Caco-2 (cell line): ENCODE measurements at regions of chr6 and their contacts with region 1.

Region 1: GRCh38 chr6:50602292-50602691 is 111.0 kb upstream of the TFAP2D start:
- DNase-seq: peak in 1 of 2 experiments; percentile 57
- H3K4me3 ChIP-seq: no peak overlapping the region
- H3K4me3 Mint-ChIP-seq: no peak overlapping the region
- H3K27ac Mint-ChIP-seq: no peak overlapping the region
- H3K4me1 ChIP-seq: no peaks in the 10 kb centered on the region
- H3K4me1 Mint-ChIP-seq: no peaks in the 10 kb centered on the region
- H3K27me3 ChIP-seq: no peaks in the 10 kb centered on the region
- H3K27me3 Mint-ChIP-seq: no peaks in the 10 kb centered on the region
- CTCF ChIP-seq: peak; percentile 63 to 66

Region 2: DNA sequence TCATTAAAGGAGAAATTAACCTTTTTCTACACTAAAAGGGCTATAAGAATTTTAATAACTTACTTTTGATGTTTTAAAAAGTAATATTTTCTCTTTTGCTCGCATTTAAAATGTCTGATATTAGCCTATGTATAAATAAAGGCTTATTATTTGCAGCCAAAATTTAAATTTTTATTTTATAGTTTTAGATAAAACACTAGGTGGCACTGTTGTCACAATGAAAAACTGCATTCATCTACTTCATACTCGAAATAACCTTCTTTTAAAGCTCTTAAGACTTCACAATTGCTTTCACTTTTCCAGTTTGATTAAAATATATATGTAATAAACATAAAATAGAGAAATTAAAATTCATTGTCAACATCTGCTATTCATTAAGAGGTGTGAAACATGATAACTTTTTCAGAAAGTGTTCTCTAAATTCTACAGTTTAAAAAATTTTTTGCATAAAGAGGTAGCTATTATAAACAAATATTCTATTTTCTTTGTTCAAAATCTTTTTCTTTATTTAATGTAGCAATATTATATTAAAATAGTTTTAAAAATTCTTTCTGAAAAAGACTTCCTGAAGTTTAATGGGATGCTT is 473.8 kb before region 1 on chr6:
- CTCF ChIA-PET with region 1: interaction called, 3 read pairs
- POLR2A ChIA-PET with region 1: no interaction called
- intact Hi-C with region 1: loop called (anchors 1 kb)
- DNase-seq: no peak
- H3K4me3 ChIP-seq: no peak overlapping the region
- H3K4me3 Mint-ChIP-seq: no peak overlapping the region
- H3K27ac Mint-ChIP-seq: no peak overlapping the region
- H3K4me1 ChIP-seq: no peaks in the 10 kb centered on the region
- H3K4me1 Mint-ChIP-seq: peaks cover 6% of the 10 kb centered on the region
- H3K27me3 ChIP-seq: no peaks in the 10 kb centered on the region
- H3K27me3 Mint-ChIP-seq: no peaks in the 10 kb centered on the region
- CTCF ChIP-seq: peak; percentile 16 to 41

Region 3: DNA sequence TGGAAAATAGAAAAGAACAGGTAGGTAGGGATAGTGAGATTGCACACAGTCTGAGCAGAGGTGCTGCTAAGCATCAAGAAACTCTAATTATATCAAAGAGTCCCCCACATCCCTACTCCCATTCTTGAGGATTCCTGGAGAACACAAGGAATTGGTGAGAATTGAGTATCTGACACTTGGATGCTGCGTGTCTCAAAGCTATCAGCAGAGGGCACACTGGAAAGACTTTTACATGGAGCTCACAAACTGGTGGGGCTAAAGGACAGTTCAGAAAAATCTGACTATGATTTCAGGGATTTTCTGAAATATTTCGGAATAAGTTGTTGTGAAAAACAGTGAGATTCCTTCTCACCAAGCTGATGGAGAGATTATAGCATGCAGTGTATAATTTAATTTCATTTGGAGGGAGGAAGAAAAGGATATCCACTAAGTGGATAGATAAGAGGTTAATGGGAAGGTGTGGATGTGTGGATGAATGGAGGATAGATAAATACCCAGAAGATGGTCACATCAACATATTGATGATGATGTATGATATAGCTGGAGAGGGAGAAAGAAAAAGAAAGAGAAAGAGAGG is 337.2 kb before region 1 on chr6:
- CTCF ChIA-PET with region 1: interaction called, 3 read pairs
- POLR2A ChIA-PET with region 1: no interaction called
- intact Hi-C with region 1: loop called (anchors 1 kb)
- DNase-seq: peak in 1 of 2 experiments; percentile 13
- H3K4me3 ChIP-seq: no peak overlapping the region
- H3K4me3 Mint-ChIP-seq: no peak overlapping the region
- H3K27ac Mint-ChIP-seq: no peak overlapping the region
- H3K4me1 ChIP-seq: no peaks in the 10 kb centered on the region
- H3K4me1 Mint-ChIP-seq: no peaks in the 10 kb centered on the region
- H3K27me3 ChIP-seq: no peaks in the 10 kb centered on the region
- H3K27me3 Mint-ChIP-seq: peaks cover 7% of the 10 kb centered on the region
- CTCF ChIP-seq: peak; percentile 50 to 54

Region 4: DNA sequence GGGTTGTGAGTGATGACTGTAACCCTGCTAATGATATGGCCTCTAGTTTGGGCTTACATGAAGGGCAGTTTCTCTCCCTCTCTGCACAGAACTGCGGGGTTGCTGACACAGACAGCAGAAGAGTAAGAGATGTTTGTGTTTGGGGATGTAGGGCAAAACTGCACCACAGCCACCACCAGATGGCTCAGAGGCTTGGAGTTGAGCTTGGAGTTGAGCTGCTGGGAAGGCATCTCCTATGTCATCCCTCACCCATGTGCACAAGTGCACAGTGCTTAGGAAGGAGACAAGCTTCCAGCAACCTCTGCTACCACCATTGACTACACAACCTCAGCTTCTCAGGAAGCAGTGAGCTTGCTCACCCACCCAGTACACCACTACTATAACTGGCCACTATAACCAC is 248.7 kb before region 1 on chr6:
- CTCF ChIA-PET with region 1: no interaction called
- POLR2A ChIA-PET with region 1: no interaction called
- intact Hi-C with region 1: loop called (anchors 1 kb)
- DNase-seq: peak in 1 of 2 experiments; percentile 10
- H3K4me3 ChIP-seq: no peak overlapping the region
- H3K4me3 Mint-ChIP-seq: no peak overlapping the region
- H3K27ac Mint-ChIP-seq: no peak overlapping the region
- H3K4me1 ChIP-seq: no peaks in the 10 kb centered on the region
- H3K4me1 Mint-ChIP-seq: no peaks in the 10 kb centered on the region
- H3K27me3 ChIP-seq: no peaks in the 10 kb centered on the region
- H3K27me3 Mint-ChIP-seq: no peaks in the 10 kb centered on the region
- CTCF ChIP-seq: no peak

Region 5: GRCh38 chr6:50655848-50656453 is 53.7 kb after region 1 on chr6:
- CTCF ChIA-PET with region 1: no interaction called
- POLR2A ChIA-PET with region 1: no interaction called
- intact Hi-C with region 1: no loop called
- DNase-seq: peak in 1 of 2 experiments; percentile 18
- H3K4me3 ChIP-seq: no peak overlapping the region
- H3K4me3 Mint-ChIP-seq: no peak overlapping the region
- H3K27ac Mint-ChIP-seq: no peak overlapping the region
- H3K4me1 ChIP-seq: no peaks in the 10 kb centered on the region
- H3K4me1 Mint-ChIP-seq: no peaks in the 10 kb centered on the region
- H3K27me3 ChIP-seq: no peaks in the 10 kb centered on the region
- H3K27me3 Mint-ChIP-seq: peaks cover 2% of the 10 kb centered on the region
- CTCF ChIP-seq: peak; percentile 49 to 70